ENCODE measurements at regions of chr4 and their contacts with region 1.

Region 1: DNA sequence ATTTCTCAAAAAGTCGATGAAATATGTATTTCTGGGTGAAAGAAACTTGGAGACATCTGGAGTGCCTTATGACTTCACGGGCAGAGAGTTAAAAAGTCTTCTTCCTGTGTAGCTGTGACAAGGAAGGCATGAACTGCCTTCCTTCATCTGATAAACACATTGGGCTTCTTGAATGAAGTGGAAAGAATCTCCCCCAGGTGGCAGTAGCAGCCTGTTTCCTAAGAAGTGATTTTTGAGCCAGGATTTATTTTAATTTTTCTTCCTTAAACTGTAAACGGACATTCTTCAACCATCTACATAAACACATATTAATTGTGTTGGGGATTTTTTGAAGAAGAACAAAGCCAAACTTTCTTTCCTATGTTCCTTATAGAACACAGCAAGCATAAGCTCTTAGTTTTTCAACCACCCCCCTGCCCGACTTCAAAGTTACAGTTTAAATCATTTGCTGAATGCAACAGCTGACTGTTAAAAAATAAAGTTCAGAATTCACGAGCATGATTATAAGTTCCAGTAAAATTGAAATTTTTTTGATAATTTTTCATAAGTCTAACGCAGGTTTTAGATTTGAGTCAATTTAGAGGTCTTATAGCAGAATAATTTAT is 980 bp upstream of the GIMD1 start:
- DNase-seq: peak in 1 of 2 donors; percentile 27
- ATAC-seq: peak; percentile 71

Region 2: DNA sequence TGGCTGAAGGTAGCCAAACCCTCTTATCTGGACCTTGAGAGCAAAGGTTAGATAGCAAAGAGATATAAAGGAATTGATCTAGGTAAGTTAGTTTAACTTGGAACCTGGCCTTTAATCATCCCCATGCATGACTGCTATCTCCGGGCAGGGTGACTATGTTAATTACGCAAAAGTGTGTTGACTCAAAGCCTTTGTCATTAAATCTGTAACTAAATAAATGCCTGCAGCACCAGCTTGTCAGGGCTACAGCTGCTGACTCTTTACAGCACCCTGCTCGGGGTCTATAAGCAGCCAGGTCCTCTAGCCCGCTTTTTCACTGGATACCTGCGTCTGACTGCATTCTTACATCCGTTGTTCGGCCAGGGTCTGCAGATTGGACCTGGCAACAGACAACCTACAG is 255.3 kb before region 1 on chr4:
- intact Hi-C with region 1: no loop called
- DNase-seq: no peak
- ATAC-seq: peak; percentile 40

Region 3: GRCh38 chr4:106717091-106717490 is 347.5 kb after region 1 on chr4:
- intact Hi-C with region 1: no loop called
- DNase-seq: no peak
- ATAC-seq: no peak

Region 4: DNA sequence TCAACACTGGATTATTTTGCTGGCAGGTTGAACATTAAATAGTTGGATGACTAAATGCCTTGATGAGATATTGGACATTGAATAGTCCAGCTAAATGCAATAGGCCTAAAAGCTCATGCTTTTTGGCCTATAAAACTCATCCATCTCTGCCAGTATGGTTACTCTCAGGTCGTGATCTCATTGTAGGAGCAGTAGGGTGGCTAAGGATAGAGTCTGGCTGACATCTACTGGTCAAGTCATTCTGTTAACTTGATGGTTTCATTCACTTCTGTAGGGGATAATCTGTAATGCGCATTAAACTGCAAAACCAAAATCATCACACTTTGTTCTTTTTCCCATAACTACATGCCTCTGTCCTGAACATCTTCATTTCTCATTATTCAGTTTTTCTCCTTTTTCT is 439.5 kb after region 1 on chr4:
- intact Hi-C with region 1: loop called in 1 of 2 experiments (anchors 5 kb)
- DNase-seq: no peak
- ATAC-seq: peak; percentile 79

Region 5: DNA sequence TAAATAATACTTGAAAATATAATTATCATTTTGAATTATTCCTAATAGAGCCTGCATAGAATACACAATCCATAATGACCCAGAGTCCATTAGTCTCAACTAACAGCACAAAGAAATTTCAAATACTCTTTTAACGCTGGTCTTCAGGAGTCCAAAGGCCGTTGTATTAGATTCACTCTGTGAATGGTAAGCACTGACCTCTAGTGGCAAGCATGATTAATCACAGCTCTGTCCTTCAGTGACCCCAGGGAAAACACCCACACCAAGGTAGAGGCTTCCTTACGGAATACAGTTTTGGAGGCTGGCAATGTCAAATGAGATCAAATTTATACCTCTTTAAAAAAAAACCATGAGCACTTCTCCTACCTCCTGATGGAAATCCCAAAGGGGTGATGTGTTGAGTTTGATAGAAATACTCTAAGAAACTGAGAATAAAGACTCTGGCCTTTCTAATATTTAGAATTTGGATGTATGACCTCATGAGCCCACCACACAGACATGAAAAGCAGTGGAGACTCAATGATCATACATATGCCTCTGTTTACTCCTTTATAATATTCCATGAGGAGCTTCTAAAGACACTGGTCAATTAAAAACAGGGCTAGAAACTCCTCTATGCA is 813.7 kb after region 1 on chr4:
- intact Hi-C with region 1: loop called in 1 of 2 experiments (anchors 5 kb)
- DNase-seq: peak in 1 of 2 donors; percentile 4
- ATAC-seq: peak; percentile 90

Measured in left colon (tissue), 2 donors.